Esophagus squamous epithelium (tissue), 5 donors: ENCODE measurements at regions of chr2 and their contacts with region 1.

Region 1: DNA sequence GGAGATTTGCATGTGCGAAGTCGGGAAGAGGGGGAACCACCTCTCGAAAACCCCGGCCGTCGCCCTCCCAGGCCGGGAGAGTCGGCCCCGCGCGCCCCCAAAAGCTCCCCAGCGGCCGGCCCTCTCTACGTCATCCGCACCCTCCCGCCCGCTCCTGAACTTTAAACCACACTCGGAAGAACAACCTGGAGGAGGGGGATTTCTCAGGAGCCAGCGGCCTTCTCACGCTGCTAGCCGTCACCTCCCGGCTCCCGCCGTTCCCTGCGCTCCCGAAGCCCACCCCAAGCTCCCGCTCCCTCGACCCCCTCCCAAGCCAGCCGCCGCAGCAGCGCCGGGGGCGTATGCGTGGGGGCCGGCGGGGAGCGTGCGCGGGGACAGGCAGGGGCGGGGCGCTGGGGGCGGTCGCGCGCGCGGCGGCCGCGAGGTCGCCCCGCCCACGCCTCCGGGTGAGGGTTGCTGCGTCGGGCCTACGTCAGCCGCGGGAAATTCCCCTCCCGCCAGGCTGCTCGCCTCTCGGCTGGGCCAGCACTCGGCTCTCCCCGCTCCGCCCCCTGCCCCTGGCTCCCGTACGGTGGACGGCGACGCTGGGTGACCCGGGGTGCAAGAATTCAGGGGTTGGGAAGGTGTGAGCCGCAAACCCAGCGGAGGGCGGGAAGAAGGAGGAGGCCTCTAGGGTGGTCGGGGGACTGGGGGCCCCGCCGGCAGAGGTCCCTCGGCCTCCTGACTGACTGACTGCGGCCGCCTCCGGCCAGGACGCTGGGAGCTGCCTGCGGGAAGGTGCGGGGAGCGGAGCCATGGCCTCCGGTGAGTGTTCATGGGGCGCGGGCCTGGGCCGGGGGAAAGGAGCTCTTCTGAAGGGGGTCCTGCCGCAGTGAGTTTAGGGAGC is at the start of gene REL:
- DNase-seq: peak; percentile 45
- H3K4me3 ChIP-seq: peak within 1 kb of the TSS; percentile 76 to 86 (median 79)
- H3K27ac ChIP-seq: peak within 1 kb of the TSS; percentile 96 to 99 (median 98)
- H3K4me1 ChIP-seq: peaks cover 0 to 49% (median 15%) of the 10 kb centered on the region in 3 donors
- H3K27me3 ChIP-seq: no peaks in the 10 kb centered on the region
- CTCF ChIP-seq: peak in 2 of 6 experiments; percentile 4 to 16
- POLR2A ChIP-seq: peak in 3 of 4 donors; percentile 60 to 98 (median 91)
- total RNA-seq, gene REL: 16.3 to 20.9 (median 16.8) TPM

Region 2: DNA sequence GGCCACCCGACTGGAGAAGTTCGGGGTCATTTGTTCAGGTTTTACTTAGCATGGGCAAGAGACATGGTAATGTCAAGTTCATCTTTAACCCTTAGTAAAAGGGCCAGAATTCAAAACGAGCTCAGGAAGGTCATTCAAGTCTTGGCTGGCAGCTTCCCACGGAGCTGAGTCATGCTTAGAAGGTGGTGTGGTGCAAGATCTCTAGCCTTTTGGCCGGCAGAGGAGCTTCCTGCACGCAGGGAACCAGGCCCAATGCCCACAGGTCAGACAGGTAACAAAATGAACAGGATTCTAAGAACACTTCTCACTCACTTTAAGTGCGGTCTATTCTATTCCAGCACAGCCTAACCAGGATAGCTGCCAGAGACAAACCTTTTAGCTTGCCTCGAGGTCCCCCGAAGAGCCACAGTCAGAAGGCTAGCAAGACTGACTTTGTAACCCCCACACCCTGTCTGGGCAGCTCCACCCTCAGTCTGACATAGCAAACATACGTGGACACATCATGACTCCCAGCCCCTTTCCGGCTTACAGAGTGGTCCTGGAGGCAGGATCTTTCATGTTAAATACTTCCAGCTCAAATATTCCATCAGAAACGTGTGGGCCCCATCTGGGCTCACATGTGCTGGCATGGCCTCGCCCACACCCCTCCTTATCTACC is 620.5 kb before region 1 on chr2:
- intact Hi-C with region 1: no loop called
- DNase-seq: no peak
- H3K4me3 ChIP-seq: no peak overlapping the region
- H3K27ac ChIP-seq: peak overlapping the region; percentile 61 to 78 (median 68)
- H3K4me1 ChIP-seq: peaks cover 4 to 38% (median 6%) of the 10 kb centered on the region in 3 donors
- H3K27me3 ChIP-seq: no peaks in the 10 kb centered on the region
- CTCF ChIP-seq: no peak
- POLR2A ChIP-seq: no peak

Region 3: DNA sequence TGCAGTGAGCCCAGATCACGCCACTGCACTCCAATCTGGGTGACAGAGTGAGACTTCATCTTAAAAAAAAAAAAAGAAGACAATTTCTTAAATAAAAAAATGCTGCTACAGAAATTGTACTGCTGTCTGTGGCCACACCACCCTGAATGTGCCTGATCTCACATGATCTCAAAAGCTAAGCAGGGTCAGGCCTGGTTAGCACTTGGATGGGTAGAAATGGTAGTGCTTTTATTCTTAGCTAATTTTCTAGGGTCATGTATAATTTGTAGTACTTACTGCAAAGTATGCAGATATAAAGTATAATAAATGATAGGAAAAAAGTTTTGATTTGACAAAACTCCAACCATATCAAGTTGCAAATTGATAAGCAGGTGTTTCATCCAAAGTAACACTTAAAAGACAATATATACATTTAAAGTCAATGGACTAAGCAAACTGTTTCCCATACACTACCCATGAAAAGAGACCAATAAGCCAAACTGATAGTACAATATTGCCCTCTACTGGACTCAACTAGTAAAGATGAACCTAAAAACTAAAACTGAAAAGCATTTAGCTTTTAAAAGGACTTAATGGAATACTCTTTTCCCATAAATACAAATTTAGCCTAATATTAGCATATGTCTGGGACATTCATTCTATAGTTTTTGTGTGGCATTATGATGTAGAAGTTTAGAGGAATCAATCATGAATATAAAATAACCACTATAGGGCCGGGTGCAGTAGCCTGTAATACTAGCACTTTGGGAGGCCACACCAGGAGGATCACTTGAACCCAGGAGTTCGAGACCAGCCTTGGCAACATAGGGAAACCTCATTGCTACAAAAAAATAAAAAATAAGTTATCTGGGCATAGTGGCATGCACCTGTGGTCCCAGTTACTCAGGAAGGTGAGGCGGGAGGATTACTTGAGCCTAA is 117.6 kb after region 1 on chr2:
- intact Hi-C with region 1: loop called (anchors 10 kb)
- DNase-seq: no peak
- H3K4me3 ChIP-seq: no peak overlapping the region
- H3K27ac ChIP-seq: no peak overlapping the region
- H3K4me1 ChIP-seq: no peaks in the 10 kb centered on the region
- H3K27me3 ChIP-seq: no peaks in the 10 kb centered on the region
- CTCF ChIP-seq: peak; percentile 29 to 79 (median 55)
- POLR2A ChIP-seq: no peak